AG04449 (cell line): ENCODE measurements at regions of chr2 and their contacts with region 1.

Region 1: GRCh38 chr2:10408649-10409579 is 39.2 kb downstream of the ODC1 start:
- DNase-seq: no peak
- H3K4me3 ChIP-seq: no peak overlapping the region
- CTCF ChIP-seq: peak; percentile 98

Region 2: DNA sequence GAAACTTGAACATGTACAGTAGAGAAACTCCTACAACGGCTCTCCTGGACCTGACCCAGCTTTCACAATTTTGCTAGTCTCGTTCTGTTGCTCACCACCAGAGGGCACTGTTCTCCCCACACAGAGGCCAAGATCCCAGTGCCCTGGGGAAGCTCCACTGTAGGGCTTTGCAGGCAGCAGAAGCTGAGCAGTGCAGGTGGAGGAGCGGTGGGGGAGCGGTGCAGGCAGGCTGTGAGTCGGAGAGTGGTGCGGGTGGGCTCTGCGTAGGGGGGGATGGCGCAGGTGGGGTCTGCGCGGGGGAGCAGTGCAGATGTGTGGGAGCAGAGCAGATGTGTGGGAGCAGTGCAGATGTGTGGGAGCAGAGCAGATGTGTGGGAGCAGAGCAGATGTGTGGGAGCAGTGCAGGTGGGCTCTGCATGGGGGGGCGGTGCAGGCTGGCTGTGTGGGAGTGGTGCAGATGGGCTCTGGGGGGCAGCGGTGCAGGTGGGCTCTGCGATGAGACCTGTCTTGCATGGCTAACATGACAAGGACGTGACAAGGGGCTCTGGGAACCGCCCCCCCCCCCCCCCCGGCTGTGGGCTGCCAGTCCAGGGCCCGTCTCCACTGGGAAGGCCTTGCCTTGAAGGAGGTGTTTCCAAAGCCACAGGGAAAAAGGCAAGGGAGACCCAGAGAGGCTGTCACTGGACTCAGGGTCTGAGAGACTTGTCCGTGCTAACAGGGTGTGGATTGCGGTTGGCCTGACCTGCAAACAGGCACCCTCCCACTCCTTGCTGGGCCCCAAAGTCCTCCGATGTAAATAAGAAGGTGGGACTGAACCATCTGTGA is 336.0 kb before region 1 on chr2:
- CTCF ChIA-PET with region 1: interaction called, 65 read pairs
- POLR2A ChIA-PET with region 1: no interaction called
- DNase-seq: peak; percentile 36
- H3K4me3 ChIP-seq: no peak overlapping the region
- CTCF ChIP-seq: peak; percentile 84

Region 3: GRCh38 chr2:10122386-10123280 is 286.3 kb before region 1 on chr2 and contains the start of gene RRM2:
- CTCF ChIA-PET with region 1: interaction called, 162 read pairs
- POLR2A ChIA-PET with region 1: interaction called, 3 read pairs
- DNase-seq: no peak
- H3K4me3 ChIP-seq: peak within 1 kb of the TSS; percentile 78
- CTCF ChIP-seq: no peak

Region 4: DNA sequence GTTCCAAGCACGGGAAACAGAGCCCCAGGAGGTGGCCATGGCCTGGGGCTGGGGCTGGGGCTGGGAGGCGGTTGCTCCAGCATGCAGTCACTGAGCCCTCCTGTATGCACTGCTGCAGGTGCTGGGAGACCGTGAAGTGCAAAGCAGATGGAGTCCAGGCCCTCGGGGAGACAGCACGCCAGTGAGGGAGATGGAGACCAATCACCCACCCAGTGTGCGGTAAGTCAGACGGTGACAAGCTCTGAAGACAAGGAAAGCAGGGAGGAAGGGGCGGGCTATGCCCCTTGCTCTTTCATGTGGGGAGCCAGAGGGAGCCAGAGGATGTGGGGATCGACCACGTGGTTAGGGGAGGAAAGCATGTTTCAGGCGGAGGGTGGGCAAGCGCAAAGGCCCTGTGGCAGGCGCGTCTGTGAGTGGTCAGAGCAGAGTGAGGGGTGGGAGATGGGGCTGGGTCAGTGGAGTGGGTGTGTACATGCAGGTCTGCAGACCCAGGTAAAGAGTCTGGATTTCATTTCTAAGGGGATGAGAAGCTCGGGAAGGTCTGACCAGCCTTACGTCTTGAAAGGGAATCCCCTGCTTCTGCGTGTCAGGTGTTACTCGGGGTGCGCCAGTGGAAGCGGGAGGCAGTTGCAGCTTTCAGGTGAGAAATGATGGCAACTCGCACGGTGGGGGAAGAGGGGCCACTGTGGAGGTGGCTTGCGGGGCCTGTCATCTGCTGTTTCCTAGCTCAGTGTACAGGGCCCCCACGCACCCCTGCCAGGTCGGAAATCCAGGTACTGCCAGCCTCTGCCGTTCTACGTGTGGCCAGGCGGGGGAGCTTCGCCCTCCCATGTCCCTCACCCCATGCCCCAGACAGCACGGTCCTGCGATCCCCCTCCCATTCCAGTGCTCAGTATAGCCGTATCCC is 266.9 kb before region 1 on chr2:
- CTCF ChIA-PET with region 1: interaction called, 68 read pairs
- POLR2A ChIA-PET with region 1: no interaction called
- DNase-seq: no peak
- H3K4me3 ChIP-seq: no peak overlapping the region
- CTCF ChIP-seq: peak; percentile 56

Region 5: DNA sequence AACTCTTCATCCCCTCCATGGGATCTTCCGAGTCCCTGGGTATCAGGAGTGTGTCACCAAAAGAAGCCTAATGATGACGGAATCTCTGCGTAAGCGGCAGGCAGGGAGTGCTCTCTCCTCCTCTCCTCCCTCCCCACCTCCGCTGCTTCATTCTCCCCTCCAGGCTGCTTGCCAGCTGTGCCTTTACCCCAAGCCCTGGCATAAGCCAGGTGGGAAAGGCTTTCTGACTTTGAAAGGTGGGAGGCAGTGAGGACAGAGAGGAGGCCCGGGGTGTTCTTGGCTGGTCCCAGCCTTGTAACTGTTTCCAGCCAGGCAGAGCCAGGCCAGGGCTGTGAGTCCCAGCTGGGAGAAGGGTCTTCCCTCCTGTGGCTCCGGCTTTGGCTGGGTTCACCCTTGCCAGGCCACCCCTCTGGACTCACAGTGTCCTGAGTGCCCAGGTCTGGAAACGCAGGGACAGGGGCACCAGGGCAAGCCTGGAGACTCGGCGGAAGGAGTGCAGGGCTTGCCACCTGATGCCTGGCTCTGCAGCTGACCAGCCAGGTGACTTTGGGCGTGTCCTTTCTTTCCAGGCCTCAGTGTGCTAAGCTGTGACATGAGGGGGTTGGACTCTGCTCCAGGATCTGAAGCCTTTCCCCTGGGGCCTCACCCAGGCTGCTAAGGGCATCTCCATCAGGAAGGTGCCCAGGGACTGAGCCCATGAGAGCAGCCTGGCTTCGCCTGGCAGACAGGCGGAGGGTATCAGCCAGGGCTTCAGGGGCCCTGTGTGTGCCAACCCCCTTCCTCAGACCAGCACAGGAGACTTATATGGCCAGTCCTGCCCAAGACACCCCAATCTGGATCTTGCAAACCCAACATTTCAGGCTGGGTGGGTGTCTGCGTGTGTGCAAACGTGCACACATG is 139.0 kb before region 1 on chr2:
- CTCF ChIA-PET with region 1: interaction called, 17 read pairs
- POLR2A ChIA-PET with region 1: no interaction called
- DNase-seq: no peak
- H3K4me3 ChIP-seq: no peak overlapping the region
- CTCF ChIP-seq: no peak

Region 6: DNA sequence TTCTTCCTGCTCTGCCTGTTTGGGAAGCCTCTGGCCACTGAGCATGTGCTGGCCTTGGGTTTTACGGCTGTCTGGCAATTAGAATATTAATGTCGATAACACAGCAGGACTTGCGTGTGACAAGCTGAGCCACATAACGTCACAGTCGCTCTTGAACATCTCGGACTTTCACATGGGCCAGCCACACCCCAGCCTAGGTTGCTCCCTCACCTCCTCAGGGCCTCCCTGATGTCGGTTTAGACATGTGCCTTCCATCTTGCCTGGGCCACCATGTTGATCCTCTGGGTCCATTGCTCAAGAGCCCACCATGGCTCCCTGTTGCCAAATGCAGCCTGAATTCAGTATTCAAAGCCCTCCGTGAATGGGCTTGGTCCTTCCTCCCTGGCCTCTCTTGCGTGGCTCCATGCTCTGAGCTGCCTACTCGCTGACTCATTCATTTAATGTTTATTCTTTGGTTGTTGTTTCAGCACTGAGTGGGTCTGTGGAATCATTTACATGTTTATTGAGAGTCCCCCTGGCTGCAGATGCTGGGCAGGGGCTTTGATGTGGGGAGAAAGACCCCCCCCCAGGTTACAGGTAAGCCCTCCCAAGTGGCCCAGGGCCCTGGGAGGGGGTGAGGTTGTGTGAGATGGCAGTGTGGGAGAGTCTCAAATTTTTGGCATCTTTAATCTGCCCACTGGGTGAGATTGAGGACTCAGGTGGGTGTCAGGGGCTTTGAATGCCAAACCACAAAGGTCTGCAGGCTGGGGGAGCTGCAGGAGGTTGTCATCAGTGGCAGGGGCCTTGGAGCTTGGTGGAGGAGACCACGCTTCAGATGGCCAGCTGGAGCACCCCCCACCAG is 22.8 kb before region 1 on chr2:
- CTCF ChIA-PET with region 1: interaction called, 61 read pairs
- POLR2A ChIA-PET with region 1: no interaction called
- DNase-seq: no peak
- H3K4me3 ChIP-seq: no peak overlapping the region
- CTCF ChIP-seq: no peak

Region 7: GRCh38 chr2:10434886-10435819 is 26.2 kb after region 1 on chr2:
- CTCF ChIA-PET with region 1: interaction called, 60 read pairs
- POLR2A ChIA-PET with region 1: no interaction called
- DNase-seq: no peak
- H3K4me3 ChIP-seq: no peak overlapping the region
- CTCF ChIP-seq: peak; percentile 99

Region 8: DNA sequence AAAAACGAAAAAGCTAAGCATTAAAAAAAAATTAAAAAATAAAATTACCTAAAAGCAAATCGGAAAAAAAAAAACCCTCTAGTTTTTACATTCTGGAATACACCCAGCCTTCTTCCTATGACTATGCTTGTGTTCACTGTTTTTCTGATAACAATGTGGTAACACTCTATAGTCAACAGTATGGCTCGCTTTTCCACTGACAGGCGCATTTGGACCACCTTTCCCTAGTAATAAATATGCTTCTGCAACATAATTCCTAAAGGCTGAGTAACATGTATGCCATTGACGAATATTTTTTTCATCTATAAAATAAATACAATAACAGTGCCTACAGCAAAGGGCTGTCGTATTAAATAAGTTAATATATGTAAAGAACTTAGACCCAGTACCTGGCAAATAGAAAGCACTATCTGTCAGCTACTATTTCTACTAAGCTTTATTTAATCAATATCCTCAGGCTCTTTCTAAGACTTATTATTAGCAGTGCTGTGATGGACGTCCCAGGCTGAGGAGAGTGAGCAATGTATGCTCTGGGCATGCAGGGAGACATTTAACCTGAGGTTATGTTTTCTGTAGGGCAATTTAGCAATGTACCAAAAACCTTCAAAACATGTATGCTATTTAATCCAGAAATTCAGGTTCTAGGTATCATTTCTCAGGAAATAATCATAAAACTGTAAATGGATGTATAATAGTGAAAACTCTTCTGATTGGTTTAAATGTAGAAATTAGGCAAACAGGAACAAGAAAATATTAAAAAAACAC is 253.1 kb after region 1 on chr2:
- CTCF ChIA-PET with region 1: no interaction called
- POLR2A ChIA-PET with region 1: no interaction called
- DNase-seq: no peak
- H3K4me3 ChIP-seq: no peak overlapping the region
- CTCF ChIP-seq: no peak